ENCODE measurements at regions of chr9 and their contacts with region 1.

Region 1: GRCh38 chr9:23044549-23044948 is 597.9 kb downstream of the DMRTA1 start:
- DNase-seq: peak; percentile 88
- H3K4me3 ChIP-seq: no peak overlapping the region
- H3K27ac ChIP-seq: peak overlapping the region; percentile 85
- H3K4me1 ChIP-seq: peaks cover 44% of the 10 kb centered on the region
- H3K27me3 ChIP-seq: no peaks in the 10 kb centered on the region
- CTCF ChIP-seq: no peak
- POLR2A ChIP-seq: no peak

Region 2: GRCh38 chr9:21889673-21890072 is 1154.9 kb before region 1 on chr9:
- CTCF ChIA-PET with region 1: no interaction called
- POLR2A ChIA-PET with region 1: no interaction called
- dilution Hi-C with region 1: no loop called
- intact Hi-C with region 1: loop called (anchors 5 kb)
- DNase-seq: no peak
- H3K4me3 ChIP-seq: no peak overlapping the region
- H3K27ac ChIP-seq: no peak overlapping the region
- H3K4me1 ChIP-seq: no peaks in the 10 kb centered on the region
- H3K27me3 ChIP-seq: no peaks in the 10 kb centered on the region
- CTCF ChIP-seq: no peak
- POLR2A ChIP-seq: no peak

Region 3: DNA sequence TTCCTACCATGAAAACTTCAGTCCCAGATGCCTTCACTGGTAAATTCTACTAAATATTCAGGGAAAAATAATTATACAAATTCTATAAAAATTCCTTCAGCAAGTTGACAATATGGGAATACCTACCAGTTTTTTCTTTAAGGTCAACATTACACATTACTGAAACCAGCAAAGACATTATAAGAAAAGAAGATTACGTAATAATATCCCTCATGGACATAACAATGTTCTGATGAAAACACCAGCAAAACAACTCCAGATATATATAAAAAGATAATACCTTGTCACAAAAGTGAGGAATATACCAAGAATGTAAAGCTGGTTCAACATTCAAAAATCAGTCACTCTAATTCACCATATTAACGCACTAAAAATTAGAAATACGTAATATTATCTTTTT is 90.0 kb before region 1 on chr9:
- CTCF ChIA-PET with region 1: no interaction called
- POLR2A ChIA-PET with region 1: no interaction called
- dilution Hi-C with region 1: no loop called
- intact Hi-C with region 1: no loop called
- DNase-seq: no peak
- H3K4me3 ChIP-seq: no peak overlapping the region
- H3K27ac ChIP-seq: no peak overlapping the region
- H3K4me1 ChIP-seq: no peaks in the 10 kb centered on the region
- H3K27me3 ChIP-seq: no peaks in the 10 kb centered on the region
- CTCF ChIP-seq: no peak
- POLR2A ChIP-seq: no peak

Region 4: DNA sequence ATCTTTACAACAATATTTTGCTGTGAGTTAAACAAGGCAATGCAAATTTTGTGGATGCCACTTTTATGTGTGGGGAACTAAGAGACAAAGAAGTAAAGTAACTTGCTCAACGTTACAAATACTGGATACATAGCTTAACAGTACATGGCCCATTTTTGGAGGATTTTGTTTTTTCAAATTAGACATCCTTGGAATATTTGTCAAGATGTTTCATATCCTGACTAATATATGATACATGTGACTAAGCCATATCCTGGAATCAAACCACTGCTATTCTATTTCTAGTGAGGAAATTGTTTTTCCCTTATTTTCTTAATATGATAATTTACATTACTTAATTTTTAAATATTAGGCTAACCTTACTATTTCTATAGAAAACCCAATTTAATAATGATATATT is 68.1 kb before region 1 on chr9:
- CTCF ChIA-PET with region 1: no interaction called
- POLR2A ChIA-PET with region 1: no interaction called
- dilution Hi-C with region 1: no loop called
- intact Hi-C with region 1: loop called (anchors 2 kb)
- DNase-seq: peak; percentile 37
- H3K4me3 ChIP-seq: no peak overlapping the region
- H3K27ac ChIP-seq: peak overlapping the region; percentile 55
- H3K4me1 ChIP-seq: peaks cover 18% of the 10 kb centered on the region
- H3K27me3 ChIP-seq: no peaks in the 10 kb centered on the region
- CTCF ChIP-seq: no peak
- POLR2A ChIP-seq: no peak

Region 5: GRCh38 chr9:23081377-23081776 is 36.8 kb after region 1 on chr9:
- CTCF ChIA-PET with region 1: no interaction called
- POLR2A ChIA-PET with region 1: no interaction called
- dilution Hi-C with region 1: no loop called
- intact Hi-C with region 1: no loop called
- DNase-seq: no peak
- H3K4me3 ChIP-seq: no peak overlapping the region
- H3K27ac ChIP-seq: no peak overlapping the region
- H3K4me1 ChIP-seq: no peaks in the 10 kb centered on the region
- H3K27me3 ChIP-seq: no peaks in the 10 kb centered on the region
- CTCF ChIP-seq: no peak
- POLR2A ChIP-seq: no peak

Region 6: DNA sequence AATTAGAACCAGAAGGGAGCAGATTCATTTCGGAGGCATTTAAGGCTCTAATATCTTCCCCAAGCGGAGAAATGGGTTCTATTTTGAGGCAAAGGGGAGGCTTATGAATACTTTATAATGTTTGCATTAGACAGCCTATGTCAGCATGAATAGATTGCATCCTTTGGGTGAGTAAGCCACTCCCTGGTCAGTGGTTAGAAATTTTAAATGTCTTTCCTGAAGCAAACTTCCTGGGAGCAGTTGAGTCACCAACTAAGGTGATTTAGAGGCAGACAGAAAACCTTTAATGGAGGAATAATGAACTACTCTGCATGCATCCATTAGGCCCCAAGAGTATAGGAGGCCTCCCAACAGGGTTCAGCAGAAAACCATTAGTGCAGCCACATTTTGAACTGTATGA is 576.6 kb after region 1 on chr9:
- CTCF ChIA-PET with region 1: no interaction called
- POLR2A ChIA-PET with region 1: no interaction called
- dilution Hi-C with region 1: no loop called
- intact Hi-C with region 1: loop called (anchors 10 kb)
- DNase-seq: no peak
- H3K4me3 ChIP-seq: no peak overlapping the region
- H3K27ac ChIP-seq: peak overlapping the region; percentile 90
- H3K4me1 ChIP-seq: peaks cover 21% of the 10 kb centered on the region
- H3K27me3 ChIP-seq: no peaks in the 10 kb centered on the region
- CTCF ChIP-seq: no peak
- POLR2A ChIP-seq: no peak

Region 7: GRCh38 chr9:23826120-23826629 is 781.6 kb after region 1 on chr9 and contains the start of gene ELAVL2:
- CTCF ChIA-PET with region 1: no interaction called
- POLR2A ChIA-PET with region 1: no interaction called
- dilution Hi-C with region 1: no loop called
- intact Hi-C with region 1: loop called (anchors 10 kb)
- DNase-seq: peak; percentile 78
- H3K4me3 ChIP-seq: peak within 1 kb of the TSS; percentile 29 to 77 (median 30)
- H3K27ac ChIP-seq: no peak within 1 kb of the TSS
- H3K4me1 ChIP-seq: peaks cover 6% of the 10 kb centered on the region
- H3K27me3 ChIP-seq: peaks cover 38 to 58% of the 10 kb centered on the region in 2 experiments
- CTCF ChIP-seq: no peak
- POLR2A ChIP-seq: no peak
- total RNA-seq, gene ELAVL2: 0.18 and 0.20 TPM in 2 replicates